A549 (cell line): ENCODE measurements at regions of chr5 and their contacts with region 1.

Region 1: DNA sequence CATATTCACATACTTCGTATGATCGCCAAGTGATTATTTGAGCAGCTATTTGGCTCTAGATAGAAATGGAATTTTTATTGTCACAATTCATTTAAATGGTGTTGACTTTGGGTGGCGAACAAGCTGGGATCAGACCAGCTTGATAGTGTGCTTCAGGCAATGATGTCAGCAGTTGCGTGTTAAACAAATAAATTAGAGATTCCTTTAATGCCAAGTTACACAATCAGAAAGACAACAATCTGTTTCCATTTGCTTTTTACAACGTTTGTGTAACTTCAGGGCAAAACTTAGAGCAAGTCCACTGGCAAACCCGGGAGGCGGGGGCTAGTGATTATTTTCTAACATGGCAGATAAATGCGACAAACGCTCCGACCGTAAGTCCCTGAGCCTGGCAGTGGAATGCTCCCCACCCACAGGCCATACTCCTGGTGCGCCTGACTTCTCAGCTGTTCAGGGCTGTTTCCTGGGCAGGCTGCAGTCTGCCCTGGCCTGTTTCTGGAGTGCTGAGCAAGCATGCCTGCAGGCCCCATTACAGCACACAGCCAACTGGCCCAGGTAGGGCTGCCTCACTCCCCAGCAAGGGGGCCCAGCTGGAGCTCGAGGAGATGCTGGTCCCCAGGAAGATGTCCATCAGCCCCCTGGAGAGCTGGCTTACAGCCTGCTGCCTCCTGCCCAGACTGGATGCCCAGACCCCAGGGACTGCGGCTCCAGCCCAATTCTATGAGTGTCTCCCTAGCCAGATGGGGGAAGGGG is 88.7 kb downstream of the BASP1 start:
- DNase-seq: peak; percentile 68 to 99
- ATAC-seq: peak; percentile 81 to 84
- H3K4me3 ChIP-seq: no peak overlapping the region
- H3K27ac ChIP-seq: peak overlapping the region; percentile 91 to 96
- H3K4me1 ChIP-seq: peaks cover 69% of the 10 kb centered on the region
- CTCF ChIP-seq: no peak
- EP300 ChIP-seq: peak; percentile 100
- POLR2A ChIP-seq: no peak
- RAD21 ChIP-seq: peak; percentile 47 to 88

Region 2: DNA sequence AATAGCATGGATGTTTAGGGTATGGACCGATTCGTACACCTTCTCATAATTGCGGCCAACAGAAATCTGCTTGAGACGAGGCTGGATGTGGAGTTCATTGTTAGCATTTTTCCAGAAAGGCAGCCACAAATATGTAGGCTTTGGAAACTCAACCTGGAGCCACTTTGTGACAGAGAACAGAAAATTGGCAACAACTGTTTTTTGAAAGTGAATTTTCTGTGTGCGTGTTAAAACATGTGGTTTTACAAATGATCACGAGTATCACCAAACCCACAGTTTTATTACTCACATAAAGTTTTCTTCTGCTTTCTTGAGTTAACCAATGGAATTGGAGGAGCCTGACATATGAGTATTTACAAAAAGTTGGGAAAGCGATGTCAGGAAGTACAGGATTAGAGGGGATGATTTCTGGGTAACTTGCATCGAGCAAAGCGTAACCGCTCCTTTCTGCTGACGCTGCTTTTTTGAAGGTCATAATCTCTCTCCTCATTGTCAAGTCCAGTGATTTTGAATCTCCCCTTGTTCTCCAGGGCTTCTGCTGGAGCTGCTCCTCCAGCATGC is 53.4 kb after region 1 on chr5:
- CTCF ChIA-PET with region 1: no interaction called
- POLR2A ChIA-PET with region 1: no interaction called
- DNase-seq: no peak
- ATAC-seq: no peak
- H3K4me3 ChIP-seq: no peak overlapping the region
- H3K27ac ChIP-seq: no peak overlapping the region
- H3K4me1 ChIP-seq: no peaks in the 10 kb centered on the region
- CTCF ChIP-seq: no peak
- EP300 ChIP-seq: no peak
- POLR2A ChIP-seq: no peak
- RAD21 ChIP-seq: no peak

Region 3: DNA sequence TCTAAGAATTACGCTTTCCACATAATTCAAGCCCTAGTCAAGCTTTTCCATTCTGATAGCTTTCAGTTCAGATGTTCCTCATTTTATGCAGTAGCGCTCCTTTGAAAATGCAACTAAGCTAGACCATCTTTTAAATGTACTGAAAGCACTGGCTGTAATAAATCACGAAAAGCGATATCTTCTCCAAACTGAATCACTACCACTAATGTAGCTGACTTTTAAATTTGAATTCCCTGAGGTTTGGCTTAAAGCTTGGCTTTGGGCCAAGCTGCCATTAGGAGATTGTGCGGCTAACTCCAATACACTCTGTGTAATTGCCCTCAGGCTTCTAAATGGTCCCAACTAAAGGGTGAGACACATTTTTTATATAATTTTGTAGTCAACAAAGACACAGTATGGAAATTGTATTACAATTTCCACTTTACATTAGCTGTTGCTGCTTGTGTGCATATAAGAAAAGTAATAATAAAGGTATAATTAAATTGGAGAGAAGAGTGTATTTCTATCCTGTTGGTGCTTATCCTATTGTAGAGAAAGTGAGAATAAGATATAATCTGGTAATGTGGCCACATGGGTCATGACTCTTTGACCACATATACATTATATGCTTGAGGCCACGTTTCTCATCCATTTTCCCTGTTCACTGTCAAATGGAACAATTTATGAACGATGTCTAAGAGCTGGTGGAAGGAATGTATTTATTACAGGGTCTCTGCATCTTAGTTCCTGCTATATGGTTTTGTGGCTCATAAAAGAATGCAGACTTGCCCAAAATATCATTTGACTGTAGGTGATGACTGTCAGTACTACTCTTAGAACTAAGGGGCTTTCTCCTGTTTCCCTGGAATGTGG is 73.2 kb after region 1 on chr5:
- CTCF ChIA-PET with region 1: interaction called, 4 read pairs
- POLR2A ChIA-PET with region 1: interaction called, 17 read pairs
- DNase-seq: no peak
- ATAC-seq: no peak
- H3K4me3 ChIP-seq: no peak overlapping the region
- H3K27ac ChIP-seq: peak overlapping the region; percentile 93 to 94
- H3K4me1 ChIP-seq: peaks cover 52% of the 10 kb centered on the region
- CTCF ChIP-seq: no peak
- EP300 ChIP-seq: no peak
- POLR2A ChIP-seq: no peak
- RAD21 ChIP-seq: no peak; a peak in 1 of 5 replicates